ENCODE measurements at regions of chr10 and their contacts with region 1.

Region 1: GRCh38 chr10:68067029-68067428 is 8.1 kb downstream of the HERC4 start:
- DNase-seq: no peak
- H3K4me3 ChIP-seq: no peak overlapping the region
- H3K27ac ChIP-seq: no peak overlapping the region
- H3K4me1 ChIP-seq: no peaks in the 10 kb centered on the region
- H3K27me3 ChIP-seq: no peaks in the 10 kb centered on the region
- CTCF ChIP-seq: no peak

Region 2: GRCh38 chr10:67668448-67668847 is 398.6 kb before region 1 on chr10:
- intact Hi-C with region 1: no loop called
- DNase-seq: no peak
- H3K4me3 ChIP-seq: no peak overlapping the region
- H3K27ac ChIP-seq: no peak overlapping the region
- H3K4me1 ChIP-seq: no peaks in the 10 kb centered on the region
- H3K27me3 ChIP-seq: no peaks in the 10 kb centered on the region
- CTCF ChIP-seq: no peak

Region 3: DNA sequence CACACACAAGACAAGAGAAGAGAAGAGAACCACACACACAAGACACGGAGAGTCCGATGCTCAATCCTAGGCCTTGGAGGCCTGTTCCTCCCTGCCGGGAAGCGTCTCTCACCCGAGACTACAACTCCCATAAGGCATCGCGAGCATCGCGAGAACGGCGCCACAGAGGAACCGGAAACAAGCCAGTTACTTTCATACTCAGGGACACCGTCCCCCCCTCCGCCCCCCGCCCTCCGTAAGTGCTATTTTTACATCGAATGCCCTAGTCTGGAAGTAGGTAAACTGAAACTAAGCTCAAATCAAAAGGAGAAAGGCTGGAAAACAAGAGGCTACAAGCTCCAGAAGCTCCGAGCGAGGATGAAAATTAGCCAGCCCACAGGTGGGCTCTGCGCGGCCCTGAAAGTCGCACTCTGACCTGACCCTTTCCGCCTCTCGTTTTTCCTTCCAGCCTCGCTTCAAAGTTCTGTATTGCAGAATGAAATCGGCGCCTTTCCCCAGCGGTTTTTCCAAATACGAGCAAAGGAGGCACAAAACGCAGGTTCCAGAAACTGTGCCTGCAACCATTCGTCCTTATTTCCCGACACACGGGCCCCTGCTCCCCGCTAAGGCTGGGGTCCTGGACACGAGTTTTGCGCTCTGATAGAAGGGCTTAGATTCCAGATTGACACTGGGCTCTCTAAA is 217.6 kb before region 1 on chr10:
- intact Hi-C with region 1: loop called (anchors 10 kb)
- DNase-seq: peak; percentile 99
- H3K4me3 ChIP-seq: peak overlapping the region; percentile 58
- H3K27ac ChIP-seq: peak overlapping the region; percentile 96
- H3K4me1 ChIP-seq: no peaks in the 10 kb centered on the region
- H3K27me3 ChIP-seq: no peaks in the 10 kb centered on the region
- CTCF ChIP-seq: no peak

Measured in colonic mucosa (tissue), 4 donors.